K562 (cell line): ENCODE measurements at regions of chr7 and their contacts with region 1.

Region 1: DNA sequence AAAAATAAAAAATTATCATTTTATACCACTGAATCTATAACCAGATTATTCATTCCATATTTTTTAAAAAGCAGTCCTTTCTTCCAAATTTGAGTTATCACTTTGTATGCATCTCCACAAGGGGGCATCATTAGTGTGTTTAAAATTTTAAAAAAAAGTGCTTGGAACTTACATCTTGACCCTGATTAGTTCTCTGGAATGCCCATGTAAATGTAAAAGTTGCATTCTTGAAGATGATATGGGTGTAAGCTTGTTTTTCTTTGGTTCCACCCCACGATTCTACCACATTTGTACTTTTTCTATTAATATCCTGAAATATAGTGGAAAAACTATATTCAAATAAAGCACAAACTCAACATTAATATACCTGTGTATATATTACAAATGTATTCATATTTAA is 144.9 kb downstream of the ELAPOR2 start:
- DNase-seq: peak; percentile 34 to 47 (median 36)
- ATAC-seq: peak; percentile 69
- H3K4me3 ChIP-seq: no peak overlapping the region
- H3K27ac ChIP-seq: no peak overlapping the region
- H3K4me1 ChIP-seq: no peaks in the 10 kb centered on the region
- H3K27me3 ChIP-seq: no peaks in the 10 kb centered on the region
- CTCF ChIP-seq: peak; percentile 45 to 69 (median 50); a peak in 4 of 6 replicates
- EP300 ChIP-seq: no peak
- POLR2A ChIP-seq: no peak
- RAD21 ChIP-seq: peak; percentile 59 to 68

Region 2: GRCh38 chr7:86667732-86668131 is 246.8 kb before region 1 on chr7:
- CTCF ChIA-PET with region 1: no interaction called
- POLR2A ChIA-PET with region 1: no interaction called
- in situ Hi-C with region 1: no loop called
- intact Hi-C with region 1: no loop called
- DNase-seq: no peak
- ATAC-seq: no peak
- H3K4me3 ChIP-seq: no peak overlapping the region
- H3K27ac ChIP-seq: no peak overlapping the region
- H3K4me1 ChIP-seq: no peaks in the 10 kb centered on the region
- H3K27me3 ChIP-seq: no peaks in the 10 kb centered on the region
- CTCF ChIP-seq: no peak
- EP300 ChIP-seq: no peak
- POLR2A ChIP-seq: no peak
- RAD21 ChIP-seq: no peak

Region 3: DNA sequence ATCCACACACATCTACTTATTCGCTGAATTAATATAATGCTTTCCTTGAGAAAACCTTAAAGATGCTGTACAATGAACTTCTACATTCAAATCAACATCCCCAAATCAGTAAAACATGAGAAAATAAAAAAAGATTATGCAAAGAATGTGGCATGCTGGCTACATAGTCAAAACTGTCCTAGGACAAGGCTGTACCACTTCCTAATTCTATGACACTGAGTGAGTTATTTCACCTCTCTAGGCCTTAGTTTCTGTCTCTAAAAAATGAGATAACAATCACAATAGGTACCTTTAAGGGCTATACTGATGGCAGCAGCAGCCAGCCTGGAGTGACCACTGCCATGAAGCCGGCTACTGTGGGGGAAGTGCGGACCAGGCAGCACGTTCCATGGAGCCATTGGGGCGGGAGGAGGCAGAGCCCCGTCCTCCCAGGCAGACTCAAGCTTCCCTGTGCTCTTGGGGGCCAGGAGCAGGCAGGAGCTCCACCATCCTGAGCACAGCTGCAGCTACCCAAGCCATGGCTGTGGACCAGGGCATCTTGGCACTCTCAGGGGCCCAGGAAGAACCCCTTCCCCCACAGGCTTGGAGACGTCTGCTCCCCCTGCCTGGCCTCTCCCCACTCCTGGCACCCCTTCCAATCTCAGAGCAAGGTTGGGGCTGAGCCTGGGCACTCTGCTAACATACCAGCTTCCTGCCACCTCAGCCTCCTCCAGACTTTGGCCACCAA is 34.7 kb after region 1 on chr7:
- CTCF ChIA-PET with region 1: no interaction called
- POLR2A ChIA-PET with region 1: no interaction called
- in situ Hi-C with region 1: no loop called
- intact Hi-C with region 1: no loop called
- DNase-seq: no peak
- ATAC-seq: peak; percentile 47
- H3K4me3 ChIP-seq: no peak overlapping the region
- H3K27ac ChIP-seq: no peak overlapping the region
- H3K4me1 ChIP-seq: peaks cover 0 to 12% of the 10 kb centered on the region in 2 experiments; a peak in 2 of 5 replicates
- H3K27me3 ChIP-seq: no peaks in the 10 kb centered on the region
- CTCF ChIP-seq: no peak
- EP300 ChIP-seq: no peak
- POLR2A ChIP-seq: no peak
- RAD21 ChIP-seq: no peak

Region 4: DNA sequence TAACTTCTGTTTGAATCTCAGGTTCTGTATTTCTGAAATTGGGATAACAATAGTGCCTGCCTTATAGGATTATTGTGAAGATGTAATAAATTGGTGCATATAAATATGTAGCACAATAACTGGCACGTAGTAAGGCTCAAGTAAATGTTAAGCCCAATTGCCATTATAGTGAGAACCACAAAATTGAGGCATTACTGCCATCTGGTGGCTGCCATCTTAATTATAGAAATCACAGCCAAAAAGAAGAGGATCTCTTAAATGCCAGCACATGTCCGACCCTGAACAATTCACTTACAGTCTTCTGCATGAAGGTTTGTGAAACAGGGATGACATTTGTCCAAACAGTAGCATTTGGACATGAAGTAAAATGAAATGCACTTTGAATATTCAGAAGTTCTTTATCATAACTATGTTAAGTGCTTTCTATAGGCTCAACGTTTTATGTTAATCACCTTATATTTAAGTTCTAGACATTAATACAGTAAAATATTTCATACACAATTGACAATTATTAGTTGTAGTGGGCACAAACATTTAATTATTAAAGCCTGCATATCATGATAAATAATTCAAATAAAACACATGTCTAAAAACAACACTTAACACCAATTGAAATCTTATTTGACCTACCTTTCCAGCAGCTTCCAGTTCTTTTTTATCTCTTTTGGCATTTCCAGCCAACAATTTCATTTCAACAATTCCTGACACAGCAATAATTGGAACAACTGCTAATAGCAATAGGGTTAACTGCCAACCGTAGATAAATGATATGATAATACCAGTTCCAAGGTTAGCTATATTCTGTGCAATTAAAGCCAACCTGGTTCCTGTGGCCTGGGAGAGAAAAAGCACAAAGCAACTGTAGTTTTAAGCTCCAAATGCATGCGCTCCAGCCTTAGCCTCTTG is 502.4 kb after region 1 on chr7:
- CTCF ChIA-PET with region 1: interaction called, 10 read pairs
- POLR2A ChIA-PET with region 1: no interaction called
- in situ Hi-C with region 1: loop called (anchors 25 kb)
- intact Hi-C with region 1: loop called (anchors 10 kb)
- DNase-seq: peak; percentile 47 to 81 (median 53)
- ATAC-seq: peak; percentile 90
- H3K4me3 ChIP-seq: no peak overlapping the region
- H3K27ac ChIP-seq: no peak overlapping the region
- H3K4me1 ChIP-seq: no peaks in the 10 kb centered on the region
- H3K27me3 ChIP-seq: no peaks in the 10 kb centered on the region; a peak in 1 of 5 replicates
- CTCF ChIP-seq: peak; percentile 67 to 93 (median 78)
- EP300 ChIP-seq: no peak
- POLR2A ChIP-seq: no peak
- RAD21 ChIP-seq: peak; percentile 99